ENCODE measurements at regions of chr19 and their contacts with region 1.

Region 1: DNA sequence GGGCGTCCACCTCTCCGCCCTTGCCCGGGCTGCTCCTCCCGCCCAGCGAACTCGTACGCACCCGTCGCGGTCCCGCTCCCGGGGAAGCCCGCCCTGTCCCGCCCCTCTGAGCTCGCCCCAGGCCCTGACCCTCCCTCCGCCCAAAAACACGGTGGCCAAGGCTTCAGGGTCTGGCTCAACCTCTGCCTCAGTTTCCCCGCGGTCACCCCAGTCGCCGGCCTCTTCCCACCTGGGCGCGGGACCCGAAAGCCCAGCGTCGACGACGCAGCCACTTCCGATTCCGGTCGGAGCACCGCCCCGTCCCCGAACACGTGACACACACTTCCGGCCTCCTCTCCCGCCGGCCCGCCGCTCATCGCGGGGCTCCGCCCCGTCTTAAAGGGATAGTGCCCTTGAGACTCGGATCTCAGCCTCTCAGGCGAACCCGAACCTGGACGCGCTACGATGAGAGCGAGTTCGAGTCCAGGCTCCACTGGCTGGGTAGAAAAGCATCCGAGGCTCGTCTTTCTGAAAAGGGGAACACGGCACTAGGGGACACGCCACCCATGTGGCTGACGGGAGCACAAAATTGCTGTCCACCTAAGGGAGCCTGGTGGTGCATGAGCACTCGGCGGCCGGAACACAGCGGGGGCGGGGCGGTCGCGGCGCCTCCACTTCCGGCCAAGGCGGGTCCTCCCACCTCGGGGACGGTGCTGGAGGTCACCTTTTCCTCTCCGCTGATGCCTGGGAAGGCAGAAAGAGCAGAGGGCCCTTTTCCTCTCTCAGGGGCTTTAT is at the start of gene C19orf25:
- DNase-seq: peak; percentile 81 to 94 (median 89)
- ATAC-seq: peak; percentile 91
- H3K4me3 ChIP-seq: peak within 1 kb of the TSS; percentile 68 to 86
- H3K4me3 Mint-ChIP-seq: peak within 1 kb of the TSS; percentile 99
- H3K27ac ChIP-seq: peak within 1 kb of the TSS; percentile 65 to 76
- H3K27ac Mint-ChIP-seq: peak within 1 kb of the TSS; percentile 98
- H3K4me1 ChIP-seq: peaks cover 12% of the 10 kb centered on the region
- H3K4me1 Mint-ChIP-seq: peaks cover 19% of the 10 kb centered on the region
- H3K27me3 ChIP-seq: no peaks in the 10 kb centered on the region
- H3K27me3 Mint-ChIP-seq: no peaks in the 10 kb centered on the region
- CTCF ChIP-seq: no peak
- total RNA-seq, gene C19orf25: 11.9 to 12.1 TPM

Region 2: GRCh38 chr19:1507763-1508509 is 28.8 kb after region 1 on chr19:
- CTCF ChIA-PET with region 1: no interaction called
- POLR2A ChIA-PET with region 1: no interaction called
- intact Hi-C with region 1: loop called (anchors 1 kb)
- DNase-seq: peak; percentile 80 to 96 (median 92)
- ATAC-seq: peak; percentile 93
- H3K4me3 ChIP-seq: peak overlapping the region; percentile 44 to 54
- H3K4me3 Mint-ChIP-seq: peak overlapping the region; percentile 75
- H3K27ac ChIP-seq: peak overlapping the region; percentile 47 to 64
- H3K27ac Mint-ChIP-seq: peak overlapping the region; percentile 88
- H3K4me1 ChIP-seq: peaks cover 40% of the 10 kb centered on the region
- H3K4me1 Mint-ChIP-seq: peaks cover 22% of the 10 kb centered on the region
- H3K27me3 ChIP-seq: peaks cover 8 to 10% of the 10 kb centered on the region in 2 experiments
- H3K27me3 Mint-ChIP-seq: peaks cover 17% of the 10 kb centered on the region
- CTCF ChIP-seq: no peak

Measured in CD8-positive, alpha-beta T cell (primary cell).